ENCODE measurements at regions of chr13 and their contacts with region 1.

Region 1: GRCh38 chr13:84844473-84844872 is 954.7 kb downstream of the SLITRK6 start:
- DNase-seq: no peak

Region 2: GRCh38 chr13:85441364-85441763 is 596.9 kb after region 1 on chr13:
- intact Hi-C with region 1: loop called in 1 of 2 experiments (anchors 5 kb)
- DNase-seq: no peak

Region 3: GRCh38 chr13:85626603-85627002 is 782.1 kb after region 1 on chr13:
- intact Hi-C with region 1: no loop called
- DNase-seq: no peak

Region 4: DNA sequence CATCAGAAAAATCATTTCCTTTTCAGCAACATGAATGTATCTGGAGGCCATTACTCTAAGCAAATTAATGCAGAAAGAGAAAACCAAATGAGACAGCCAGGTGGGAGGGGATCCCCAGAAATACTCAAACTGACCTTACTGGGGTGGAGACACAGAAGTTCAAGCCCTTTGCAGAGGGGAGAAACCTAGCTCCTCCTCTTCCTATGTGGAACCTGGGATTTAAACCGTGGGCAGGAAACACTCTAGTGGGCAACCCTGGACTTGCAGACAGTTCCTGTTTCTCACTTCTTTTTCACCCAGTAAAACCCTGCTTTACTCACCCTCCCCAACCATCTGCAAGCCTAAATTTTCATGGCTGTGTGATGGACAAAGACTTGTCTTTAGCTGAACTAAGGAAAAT is 893.5 kb after region 1 on chr13:
- intact Hi-C with region 1: no loop called
- DNase-seq: no peak